ENCODE measurements at regions of chr1 and their contacts with region 1.

Region 1: GRCh38 chr1:32448773-32449456 is 16.0 kb upstream of the ZBTB8B start:
- DNase-seq: no peak
- ATAC-seq: no peak
- H3K4me3 ChIP-seq: no peak overlapping the region
- H3K27ac ChIP-seq: no peak overlapping the region
- H3K4me1 ChIP-seq: peaks cover 0 to 6% (median 0%) of the 10 kb centered on the region in 9 donors
- H3K27me3 ChIP-seq: peaks cover 0 to 10% (median 0%) of the 10 kb centered on the region in 7 donors
- CTCF ChIP-seq: no peak

Region 2: DNA sequence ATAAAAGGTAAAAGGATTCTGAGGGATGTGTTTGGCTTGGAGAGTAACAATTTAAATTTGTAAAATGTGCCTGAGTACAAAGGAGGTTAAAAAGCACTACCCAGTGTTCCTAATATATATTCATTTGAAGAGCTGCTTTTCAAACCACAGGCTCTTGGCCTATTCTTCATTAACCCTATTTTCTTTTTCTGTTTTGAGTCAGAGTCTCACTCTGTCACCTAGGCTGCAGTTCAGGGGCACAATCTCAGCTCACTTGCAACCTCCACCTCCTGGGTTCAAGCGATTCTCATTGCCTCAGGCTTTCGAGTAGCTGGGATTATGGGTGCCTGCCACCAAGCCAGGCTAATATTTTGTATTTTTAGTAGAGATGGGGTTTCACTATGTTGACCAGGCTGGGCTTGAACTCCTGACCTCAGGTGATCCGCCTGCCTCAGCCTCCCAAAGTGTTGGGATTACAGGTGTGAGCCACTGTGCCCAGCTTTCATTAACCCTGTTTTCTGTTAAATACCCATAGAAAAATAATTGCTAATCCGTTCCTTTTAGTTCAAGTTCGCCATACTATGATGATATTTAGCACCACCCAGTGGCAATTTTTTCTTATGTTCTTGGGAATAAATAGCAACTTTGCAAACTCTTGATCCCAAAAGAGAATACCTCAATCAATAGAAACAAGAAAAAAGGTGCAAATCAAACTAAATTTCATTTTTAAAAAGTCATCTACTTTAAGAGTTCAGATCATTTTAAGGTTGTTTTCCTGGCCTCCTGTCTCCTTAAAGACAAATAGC is 171.0 kb after region 1 on chr1:
- intact Hi-C with region 1: loop called in 4 of 10 experiments (anchors 5 to 10 kb)
- DNase-seq: no peak
- ATAC-seq: no peak
- H3K4me3 ChIP-seq: no peak overlapping the region
- H3K27ac ChIP-seq: no peak overlapping the region
- H3K4me1 ChIP-seq: no peaks in the 10 kb centered on the region
- H3K27me3 ChIP-seq: no peaks in the 10 kb centered on the region
- CTCF ChIP-seq: peak in 5 of 9 donors; percentile 13 to 41 (median 26)